A549 (cell line): ENCODE measurements at regions of chr5 and their contacts with region 1.

Region 1: DNA sequence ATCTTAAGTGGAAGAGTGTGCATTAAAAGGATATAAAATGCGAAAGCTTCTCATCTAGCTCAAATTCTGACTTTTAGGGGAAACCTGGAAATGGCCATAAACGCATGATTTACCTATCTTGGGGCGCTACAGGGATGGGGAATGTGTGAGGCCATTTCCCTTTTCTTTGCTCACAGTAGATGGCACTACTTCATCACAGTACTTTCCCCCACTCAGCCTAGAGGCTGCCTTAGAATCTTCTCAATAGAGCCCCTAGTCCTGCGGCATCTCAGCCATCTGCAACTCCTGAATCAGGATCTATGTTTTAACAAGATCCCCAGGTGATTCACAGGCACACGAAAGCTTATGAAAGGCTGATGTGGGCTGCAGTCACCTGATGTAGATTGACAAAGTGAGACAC is 110.8 kb downstream of the LHFPL2 start:
- DNase-seq: peak; percentile 36 to 54
- ATAC-seq: peak; percentile 79 to 85
- H3K4me3 ChIP-seq: no peak overlapping the region
- H3K27ac ChIP-seq: peak overlapping the region; percentile 21 to 50; a peak in 5 of 6 replicates
- H3K4me1 ChIP-seq: peaks cover 22% of the 10 kb centered on the region
- CTCF ChIP-seq: peak; percentile 61
- EP300 ChIP-seq: no peak
- POLR2A ChIP-seq: no peak
- RAD21 ChIP-seq: peak; percentile 86 to 88

Region 2: GRCh38 chr5:78467752-78468357 is 70.0 kb before region 1 on chr5:
- CTCF ChIA-PET with region 1: interaction called, 23 read pairs
- POLR2A ChIA-PET with region 1: no interaction called
- DNase-seq: peak; percentile 37 to 54
- ATAC-seq: peak; percentile 58 to 86; a peak in 3 of 6 replicates
- H3K4me3 ChIP-seq: no peak overlapping the region
- H3K27ac ChIP-seq: no peak overlapping the region
- H3K4me1 ChIP-seq: 0 out of 3 replicates have a peak, but pooled peaks cover 4% of the 10 kb centered on the region
- CTCF ChIP-seq: peak; percentile 87
- EP300 ChIP-seq: no peak
- POLR2A ChIP-seq: no peak
- RAD21 ChIP-seq: peak; percentile 79 to 81

Region 3: DNA sequence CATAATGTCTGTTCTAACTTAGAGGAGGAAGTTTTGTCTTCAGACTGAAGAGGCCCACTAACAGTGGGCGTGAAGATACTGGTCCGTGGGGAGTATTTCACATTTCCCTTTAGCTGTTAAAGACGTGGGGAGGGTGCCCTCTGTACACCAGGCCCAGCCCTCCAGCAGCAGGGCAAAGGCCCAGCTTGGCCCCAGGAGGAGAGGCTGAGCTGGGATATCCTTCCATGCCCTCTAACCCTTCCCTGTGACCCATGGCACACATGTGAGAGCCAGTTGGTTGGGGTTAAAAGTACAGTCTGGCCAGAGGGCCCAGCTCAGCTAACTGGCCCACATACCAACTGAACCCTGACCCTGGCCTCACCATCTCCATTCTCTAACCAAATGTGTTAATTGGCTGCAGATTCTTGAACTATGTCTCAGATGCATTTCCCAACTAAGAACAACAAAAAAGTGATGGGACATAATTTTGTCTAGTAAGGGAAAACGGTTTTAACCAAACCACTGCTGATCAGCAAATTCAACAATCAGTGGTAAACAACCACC is 36.4 kb after region 1 on chr5:
- CTCF ChIA-PET with region 1: interaction called, 12 read pairs
- POLR2A ChIA-PET with region 1: no interaction called
- DNase-seq: no peak
- ATAC-seq: peak in 1 of 2 experiments; percentile 14; a peak in 2 of 6 replicates
- H3K4me3 ChIP-seq: no peak overlapping the region
- H3K27ac ChIP-seq: peak overlapping the region in 1 of 2 experiments; percentile 68; a peak in 3 of 6 replicates
- H3K4me1 ChIP-seq: peaks cover 44% of the 10 kb centered on the region
- CTCF ChIP-seq: no peak
- EP300 ChIP-seq: no peak
- POLR2A ChIP-seq: no peak
- RAD21 ChIP-seq: no peak

Region 4: DNA sequence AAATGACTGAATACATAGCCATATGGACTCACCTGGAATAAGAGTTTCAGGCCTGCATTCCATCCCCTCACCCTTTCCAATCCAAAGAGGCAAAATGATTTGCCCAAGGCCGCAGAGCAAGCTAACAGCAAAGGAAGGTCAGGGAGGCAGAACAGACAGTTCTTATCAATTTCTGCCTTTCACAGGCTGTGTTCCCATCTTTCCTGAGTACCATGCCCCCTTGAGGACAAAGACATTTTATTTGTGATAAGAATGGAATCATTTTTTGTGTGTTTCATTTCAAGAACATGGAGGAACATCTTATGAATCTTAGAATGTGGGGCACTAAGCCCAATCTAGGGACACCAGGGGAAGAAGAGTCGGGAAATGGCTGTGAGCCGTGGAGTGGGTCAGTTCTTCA is 96.8 kb after region 1 on chr5:
- CTCF ChIA-PET with region 1: interaction called, 12 read pairs
- POLR2A ChIA-PET with region 1: no interaction called
- DNase-seq: peak in 1 of 2 experiments; percentile 24
- ATAC-seq: no peak; a peak in 1 of 6 replicates
- H3K4me3 ChIP-seq: no peak overlapping the region
- H3K27ac ChIP-seq: peak overlapping the region in 1 of 2 experiments; percentile 51; a peak in 2 of 6 replicates
- H3K4me1 ChIP-seq: peaks cover 47% of the 10 kb centered on the region
- CTCF ChIP-seq: peak; percentile 37; the same call in 2 of the 3 replicates
- EP300 ChIP-seq: no peak
- POLR2A ChIP-seq: no peak
- RAD21 ChIP-seq: peak; percentile 43 to 47

Region 5: GRCh38 chr5:78964887-78965286 is 427.1 kb after region 1 on chr5:
- CTCF ChIA-PET with region 1: interaction called, 15 read pairs
- POLR2A ChIA-PET with region 1: no interaction called
- DNase-seq: peak; percentile 38 to 77
- ATAC-seq: peak; percentile 90 to 92
- H3K4me3 ChIP-seq: no peak overlapping the region
- H3K27ac ChIP-seq: no peak overlapping the region
- H3K4me1 ChIP-seq: no peaks in the 10 kb centered on the region
- CTCF ChIP-seq: peak; percentile 84
- EP300 ChIP-seq: no peak
- POLR2A ChIP-seq: no peak
- RAD21 ChIP-seq: peak; percentile 89 to 93